Endothelial cell of umbilical vein (primary cell): ENCODE measurements at regions of chr14 and their contacts with region 1.

Region 1: DNA sequence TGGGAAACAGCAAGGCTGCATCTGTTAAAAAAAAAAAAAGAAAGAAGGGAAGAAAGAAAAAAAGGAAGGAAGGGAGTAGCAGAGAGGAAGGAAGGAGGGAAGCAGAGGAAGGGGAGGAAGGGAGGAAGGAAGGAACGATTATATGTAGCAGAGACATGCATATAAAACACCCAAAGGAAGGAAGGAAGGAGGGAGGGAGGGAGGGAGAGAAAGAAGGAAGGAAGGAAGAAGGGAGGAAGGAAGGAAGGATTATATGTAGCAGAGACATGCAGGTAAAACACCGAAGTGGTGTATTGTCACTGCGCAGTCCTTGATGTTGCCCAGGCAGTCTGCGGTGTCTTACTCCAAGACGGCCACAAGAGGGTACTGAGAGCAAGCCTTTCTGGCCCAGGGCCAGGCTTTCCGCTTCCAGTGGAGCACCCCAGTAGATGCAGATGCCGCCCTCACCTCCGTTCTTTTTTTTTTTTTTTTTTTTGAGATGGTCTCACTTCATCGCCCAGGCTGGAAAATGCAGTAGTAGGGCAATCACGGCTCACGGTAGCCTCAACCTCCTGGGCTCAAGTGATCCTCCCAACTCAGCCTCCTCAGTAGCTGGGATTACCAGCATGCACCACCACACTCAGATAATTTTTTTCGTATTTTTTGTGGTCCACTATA is 5.8 kb upstream of the LBHD2 start:
- DNase-seq: peak; percentile 69
- H3K4me3 ChIP-seq: no peak overlapping the region
- H3K27ac ChIP-seq: no peak overlapping the region
- H3K4me1 ChIP-seq: peaks cover 8% of the 10 kb centered on the region
- H3K27me3 ChIP-seq: peaks cover 0 to 2% of the 10 kb centered on the region in 2 experiments
- CTCF ChIP-seq: peak; percentile 63 to 90
- POLR2A ChIP-seq: no peak

Region 2: GRCh38 chr14:103057365-103058096 is 20.7 kb before region 1 on chr14 and contains the start of gene CDC42BPB:
- CTCF ChIA-PET with region 1: interaction called, 11 read pairs
- POLR2A ChIA-PET with region 1: interaction called, 3 read pairs
- dilution Hi-C with region 1: no loop called
- intact Hi-C with region 1: loop called (anchors 1 kb)
- DNase-seq: peak; percentile 89
- H3K4me3 ChIP-seq: peak within 1 kb of the TSS; percentile 93 to 96 (median 95)
- H3K27ac ChIP-seq: peak within 1 kb of the TSS; percentile 91
- H3K4me1 ChIP-seq: peaks cover 22% of the 10 kb centered on the region
- H3K27me3 ChIP-seq: no peaks in the 10 kb centered on the region
- CTCF ChIP-seq: no peak
- POLR2A ChIP-seq: no peak
- total RNA-seq, gene CDC42BPB: 131 and 136 TPM in 2 replicates

Region 3: DNA sequence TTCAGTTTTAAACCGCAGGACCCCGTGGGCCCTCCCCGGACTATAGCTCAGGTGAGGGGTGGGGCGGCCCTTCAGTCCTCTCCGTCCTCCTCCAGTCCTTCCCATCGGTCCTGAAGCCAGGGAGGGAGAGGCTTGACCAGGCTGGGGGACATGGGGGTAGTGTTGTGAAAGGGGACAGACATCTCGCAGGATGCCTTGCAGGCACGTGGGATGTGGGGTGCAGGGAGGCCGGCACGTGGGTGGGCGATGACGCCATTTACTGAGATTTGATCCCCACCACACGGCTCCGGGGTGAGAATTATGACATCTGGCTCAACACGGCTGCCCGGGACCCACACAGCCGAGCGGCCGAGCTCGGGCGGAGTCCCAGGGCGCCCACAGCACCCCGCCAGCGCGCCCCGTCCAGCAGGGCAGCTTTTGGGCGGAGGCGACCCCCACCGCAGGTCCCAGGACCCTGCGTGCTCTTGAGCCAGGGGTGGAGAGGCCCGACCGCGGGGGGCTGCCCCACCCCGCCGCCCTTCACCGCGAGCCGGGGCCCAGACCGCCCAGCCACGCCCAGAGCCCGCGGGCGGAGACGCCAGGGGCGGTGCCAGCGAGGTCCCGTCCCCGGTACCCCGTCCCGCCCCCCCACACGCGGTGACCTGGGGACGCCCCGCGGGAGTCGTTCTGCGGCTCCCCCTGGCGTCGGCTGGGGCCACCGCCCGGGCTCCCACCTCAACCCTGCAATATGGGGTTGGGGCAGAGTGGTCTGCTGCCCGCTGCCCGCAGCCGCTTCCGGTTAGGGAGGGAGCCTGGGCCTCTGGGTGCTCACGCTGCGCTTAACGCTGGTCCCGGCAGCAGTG is 13.0 kb after region 1 on chr14:
- CTCF ChIA-PET with region 1: interaction called, 8 read pairs
- POLR2A ChIA-PET with region 1: no interaction called
- dilution Hi-C with region 1: no loop called
- intact Hi-C with region 1: loop called (anchors 1 kb)
- DNase-seq: no peak
- H3K4me3 ChIP-seq: peak overlapping the region in 2 of 3 experiments; percentile 22 to 24
- H3K27ac ChIP-seq: no peak overlapping the region
- H3K4me1 ChIP-seq: peaks cover 4% of the 10 kb centered on the region
- H3K27me3 ChIP-seq: no peaks in the 10 kb centered on the region
- CTCF ChIP-seq: peak; percentile 30 to 64
- POLR2A ChIP-seq: no peak

Region 4: GRCh38 chr14:103155013-103155412 is 76.8 kb after region 1 on chr14:
- CTCF ChIA-PET with region 1: no interaction called
- POLR2A ChIA-PET with region 1: no interaction called
- dilution Hi-C with region 1: no loop called
- intact Hi-C with region 1: no loop called
- DNase-seq: no peak
- H3K4me3 ChIP-seq: no peak overlapping the region
- H3K27ac ChIP-seq: no peak overlapping the region
- H3K4me1 ChIP-seq: no peaks in the 10 kb centered on the region
- H3K27me3 ChIP-seq: peaks cover 2 to 5% of the 10 kb centered on the region in 2 experiments
- CTCF ChIP-seq: no peak
- POLR2A ChIP-seq: no peak

Region 5: DNA sequence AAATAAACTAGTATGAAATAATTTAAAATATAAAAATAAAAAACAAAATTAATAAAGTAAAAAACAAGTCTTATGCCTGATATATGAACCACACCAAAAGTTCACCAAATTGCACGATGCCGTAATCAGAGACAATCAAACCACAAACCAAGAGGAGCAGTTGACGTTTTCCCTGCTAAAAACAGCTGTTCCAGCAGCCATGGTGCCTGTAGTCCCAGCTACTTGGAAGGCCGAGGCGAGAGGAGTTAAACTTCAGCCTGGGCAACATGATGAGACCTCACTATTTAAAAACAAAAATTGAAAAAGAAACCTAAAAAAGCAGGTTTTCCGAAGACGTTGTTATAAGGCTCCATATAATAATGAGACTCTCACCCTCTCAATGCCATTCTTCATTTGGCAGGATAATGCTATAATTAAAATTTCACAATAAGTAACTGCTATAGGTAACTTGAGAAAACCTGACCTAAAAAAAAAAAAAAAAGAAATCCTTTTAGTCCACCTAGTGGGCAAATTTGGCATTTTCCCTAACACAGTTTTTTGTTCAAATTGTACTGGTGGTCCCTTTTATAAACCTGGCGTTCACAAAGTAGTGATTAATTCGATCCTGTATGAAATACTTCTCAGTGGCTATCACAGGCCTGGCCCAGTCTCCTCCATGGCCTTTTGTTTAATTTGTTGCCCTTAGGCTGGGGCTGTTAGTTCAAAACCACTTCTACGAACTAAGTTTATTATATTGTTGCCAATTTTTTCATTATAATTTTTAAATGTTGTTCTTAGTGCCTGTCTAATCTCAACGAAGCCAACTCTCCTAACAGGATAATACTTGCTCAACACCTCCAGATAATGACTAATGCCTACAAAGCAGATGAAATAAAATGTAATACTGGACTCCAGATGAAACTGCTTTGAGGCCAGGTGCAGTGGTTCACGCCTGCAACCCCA is 107.1 kb after region 1 on chr14:
- CTCF ChIA-PET with region 1: interaction called, 8 read pairs
- POLR2A ChIA-PET with region 1: no interaction called
- dilution Hi-C with region 1: no loop called
- intact Hi-C with region 1: loop called (anchors 1 kb)
- DNase-seq: peak; percentile 71
- H3K4me3 ChIP-seq: no peak overlapping the region
- H3K27ac ChIP-seq: no peak overlapping the region
- H3K4me1 ChIP-seq: no peaks in the 10 kb centered on the region
- H3K27me3 ChIP-seq: peaks cover 17 to 22% of the 10 kb centered on the region in 2 experiments
- CTCF ChIP-seq: peak; percentile 36 to 47
- POLR2A ChIP-seq: no peak